ENCODE measurements at regions of chr18 and their contacts with region 1.

Region 1: GRCh38 chr18:286515-287310 is 18.9 kb upstream of the THOC1 start:
- DNase-seq: no peak
- ATAC-seq: no peak

Region 2: GRCh38 chr18:335733-336132 is 49.0 kb after region 1 on chr18:
- intact Hi-C with region 1: no loop called
- DNase-seq: no peak
- ATAC-seq: no peak

Region 3: DNA sequence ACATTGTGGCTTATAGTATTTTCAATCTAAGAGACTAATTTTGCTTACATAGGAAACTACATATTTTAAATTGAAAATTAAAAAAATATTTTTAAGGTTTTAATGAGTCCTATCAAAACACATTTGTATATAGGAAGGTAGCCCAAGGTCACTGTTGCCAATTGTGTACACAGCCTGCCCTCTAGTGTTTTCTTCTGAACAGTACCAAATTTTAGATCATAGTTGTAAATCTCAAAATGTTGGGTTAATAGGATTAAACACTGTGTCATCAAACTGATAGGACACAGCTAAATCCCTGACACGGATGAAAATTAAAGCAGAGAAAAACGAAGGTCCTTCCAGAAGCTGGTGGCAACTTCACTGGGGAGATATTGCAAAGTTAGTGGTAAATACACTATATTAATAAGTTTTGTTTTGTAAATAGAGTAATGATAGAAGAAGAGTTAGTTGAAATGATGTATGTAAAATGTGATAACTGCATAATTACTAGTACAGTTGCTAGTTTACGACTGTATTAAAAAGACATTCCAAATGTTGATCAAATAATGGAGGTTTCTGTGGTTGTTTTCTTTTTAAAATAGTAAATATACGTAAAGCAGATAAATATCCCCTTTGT is 329.8 kb after region 1 on chr18:
- intact Hi-C with region 1: loop called (anchors 5 kb)
- DNase-seq: no peak
- ATAC-seq: peak; percentile 69

Measured in sciatic nerve (tissue), 2 donors.